Activated CD4-positive, alpha-beta T cell treated with anti-CD3 and anti-CD28 coated beads for 36 hours (primary cell): ENCODE measurements at regions of chr11 and their contacts with region 1.

Region 1: GRCh38 chr11:35192347-35192746 is 53.4 kb downstream of the CD44 start:
- DNase-seq: no peak
- ATAC-seq: no peak
- H3K4me3 Mint-ChIP-seq: no peak overlapping the region
- H3K27ac Mint-ChIP-seq: peak overlapping the region; percentile 35
- H3K4me1 Mint-ChIP-seq: peaks cover 89% of the 10 kb centered on the region
- H3K27me3 Mint-ChIP-seq: no peaks in the 10 kb centered on the region

Region 2: DNA sequence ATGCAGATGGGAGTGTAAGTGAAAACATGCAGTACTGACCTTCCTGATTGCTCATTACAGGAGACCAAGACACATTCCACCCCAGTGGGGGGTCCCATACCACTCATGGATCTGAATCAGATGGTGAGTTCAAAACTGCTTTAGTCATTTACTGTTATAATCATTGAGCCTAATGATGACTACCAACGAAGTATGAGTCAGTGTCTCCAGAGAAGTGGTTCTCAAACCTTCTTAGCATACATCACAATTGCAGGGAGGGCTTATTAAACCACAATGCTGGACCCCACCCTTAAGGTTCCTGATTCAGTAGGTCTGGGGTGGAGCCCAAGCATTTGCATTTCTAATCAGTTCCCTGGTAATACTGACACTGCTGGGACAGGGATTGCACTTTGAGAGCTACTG is 22.4 kb after region 1 on chr11:
- CTCF ChIA-PET with region 1: no interaction called
- POLR2A ChIA-PET with region 1: no interaction called
- intact Hi-C with region 1: loop called in 1 of 2 experiments (anchors 2 kb)
- DNase-seq: peak; percentile 69
- ATAC-seq: peak; percentile 88
- H3K4me3 Mint-ChIP-seq: peak overlapping the region; percentile 5
- H3K27ac Mint-ChIP-seq: peak overlapping the region; percentile 86
- H3K4me1 Mint-ChIP-seq: peaks cover 72% of the 10 kb centered on the region
- H3K27me3 Mint-ChIP-seq: no peaks in the 10 kb centered on the region